AG04450 (cell line): ENCODE measurements at regions of chr16 and their contacts with region 1.

Region 1: GRCh38 chr16:3264137-3265036 is 8.0 kb upstream of the MEFV start:
- DNase-seq: peak; percentile 94
- H3K4me3 ChIP-seq: peak overlapping the region; percentile 84
- H3K27ac ChIP-seq: peak overlapping the region; percentile 91
- H3K27me3 ChIP-seq: no peaks in the 10 kb centered on the region
- CTCF ChIP-seq: peak; percentile 39

Region 2: DNA sequence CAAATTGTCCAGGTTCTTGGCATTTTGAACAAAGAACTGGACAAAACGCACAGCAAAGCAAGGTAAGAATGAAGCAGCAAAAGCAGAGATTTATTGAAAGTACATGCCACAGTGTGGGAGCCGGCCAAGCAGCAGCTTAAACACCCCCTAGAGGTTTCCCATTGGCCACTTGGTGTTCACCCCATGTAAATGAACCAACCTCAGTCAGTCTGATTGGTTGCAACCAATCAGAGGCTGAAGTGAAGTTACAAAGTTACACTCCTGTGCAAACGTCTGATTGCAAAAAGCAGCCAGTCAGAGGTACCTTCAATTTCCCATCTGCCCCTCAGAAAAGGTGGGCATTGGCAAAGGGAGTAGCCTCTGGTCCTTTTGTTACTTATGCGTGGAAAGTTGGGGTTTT is 10.1 kb after region 1 on chr16:
- CTCF ChIA-PET with region 1: interaction called, 24 read pairs
- POLR2A ChIA-PET with region 1: no interaction called
- DNase-seq: no peak
- H3K4me3 ChIP-seq: no peak overlapping the region
- H3K27ac ChIP-seq: no peak overlapping the region
- H3K27me3 ChIP-seq: peaks cover 4% of the 10 kb centered on the region
- CTCF ChIP-seq: no peak

Region 3: DNA sequence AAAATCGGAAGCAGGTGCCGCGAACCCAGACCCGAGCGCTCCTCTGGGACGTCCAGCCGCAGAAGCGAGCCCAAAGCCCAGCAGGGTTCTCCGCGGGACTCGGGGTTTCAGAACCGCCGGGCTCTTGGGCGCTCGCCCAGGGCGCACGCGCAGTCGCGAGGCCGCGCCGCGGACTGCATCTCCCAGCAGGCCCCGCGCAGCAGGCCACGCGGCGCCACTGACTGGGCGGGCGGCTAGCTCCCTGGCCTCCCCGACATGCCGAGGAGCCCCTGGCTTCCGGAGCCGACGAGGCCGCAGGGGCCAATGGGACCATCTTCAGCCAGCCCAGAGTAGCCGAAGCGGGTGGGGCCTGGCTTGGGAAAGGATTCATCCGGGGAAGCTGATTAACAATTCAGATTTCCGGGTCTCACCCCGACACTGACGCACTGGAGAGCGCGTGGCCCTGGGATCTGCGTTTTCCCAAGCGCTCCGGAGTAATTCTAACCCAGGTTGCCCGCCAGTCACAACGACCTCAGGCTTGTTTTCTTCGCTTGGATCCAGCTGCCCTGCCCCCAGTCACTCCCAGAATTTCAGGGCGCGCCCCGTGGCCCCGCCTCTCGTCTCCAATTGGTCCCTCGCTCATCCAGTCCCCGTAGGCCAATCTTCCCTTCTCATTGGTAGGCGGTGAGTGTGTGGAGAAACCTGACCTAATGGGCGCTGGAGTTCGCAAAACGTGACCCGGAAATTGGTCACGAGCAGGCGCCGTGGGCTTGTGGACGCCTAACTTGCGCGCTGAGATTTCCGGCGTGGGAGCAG is 18.5 kb after region 1 on chr16 and contains the start of gene ZNF263:
- CTCF ChIA-PET with region 1: interaction called, 24 read pairs
- POLR2A ChIA-PET with region 1: interaction called, 22 read pairs
- DNase-seq: peak; percentile 92
- H3K4me3 ChIP-seq: peak within 1 kb of the TSS; percentile 95
- H3K27ac ChIP-seq: peak within 1 kb of the TSS; percentile 100
- H3K27me3 ChIP-seq: peaks cover 2% of the 10 kb centered on the region
- CTCF ChIP-seq: no peak
- polyA plus RNA-seq, gene ZNF263: 13.2 and 22.5 TPM in 2 replicates